Activated B cell treated with CpG ODN at 0.5 μM for 24 hours (primary cell): ENCODE measurements at regions of chr1 and their contacts with region 1.

Region 1: GRCh38 chr1:76154206-76154956 is 79.8 kb downstream of the ST6GALNAC3 start:
- DNase-seq: peak; percentile 60
- ATAC-seq: peak; percentile 91
- H3K4me3 Mint-ChIP-seq: peak overlapping the region; percentile 79
- H3K27ac Mint-ChIP-seq: peak overlapping the region; percentile 42
- H3K4me1 Mint-ChIP-seq: peaks cover 17% of the 10 kb centered on the region
- H3K27me3 Mint-ChIP-seq: peaks cover 4% of the 10 kb centered on the region
- CTCF ChIP-seq: peak; percentile 59

Region 2: DNA sequence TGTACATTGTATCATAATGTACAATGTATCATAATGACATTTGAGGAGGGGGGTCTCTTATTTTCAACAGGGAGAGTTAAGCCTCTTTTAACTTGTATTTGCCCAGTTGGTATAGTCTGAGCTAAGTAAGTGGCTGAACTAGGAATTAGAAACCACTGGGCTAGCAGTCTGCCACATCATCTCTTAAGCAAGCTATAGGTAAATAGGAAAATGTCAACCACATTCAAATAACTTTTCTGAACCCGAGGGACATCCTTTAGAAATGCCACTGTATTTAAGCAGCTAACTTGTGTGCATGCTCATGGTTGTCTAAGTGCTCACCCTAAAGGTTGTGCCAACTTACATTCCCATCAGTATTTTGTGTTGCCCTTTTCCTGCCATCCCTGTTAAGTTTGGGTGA is 186.7 kb before region 1 on chr1:
- CTCF ChIA-PET with region 1: no interaction called
- POLR2A ChIA-PET with region 1: no interaction called
- intact Hi-C with region 1: no loop called
- DNase-seq: no peak
- ATAC-seq: no peak
- H3K4me3 Mint-ChIP-seq: no peak overlapping the region
- H3K27ac Mint-ChIP-seq: no peak overlapping the region
- H3K4me1 Mint-ChIP-seq: no peaks in the 10 kb centered on the region
- H3K27me3 Mint-ChIP-seq: no peaks in the 10 kb centered on the region
- CTCF ChIP-seq: no peak

Region 3: GRCh38 chr1:75991497-75992114 is 162.8 kb before region 1 on chr1:
- CTCF ChIA-PET with region 1: interaction called, 5 read pairs
- POLR2A ChIA-PET with region 1: no interaction called
- intact Hi-C with region 1: loop called (anchors 1 kb)
- DNase-seq: peak; percentile 30
- ATAC-seq: peak; percentile 58
- H3K4me3 Mint-ChIP-seq: no peak overlapping the region
- H3K27ac Mint-ChIP-seq: no peak overlapping the region
- H3K4me1 Mint-ChIP-seq: no peaks in the 10 kb centered on the region
- H3K27me3 Mint-ChIP-seq: peaks cover 3% of the 10 kb centered on the region
- CTCF ChIP-seq: peak; percentile 48

Region 4: GRCh38 chr1:76294482-76295194 is 140.3 kb after region 1 on chr1:
- CTCF ChIA-PET with region 1: no interaction called
- POLR2A ChIA-PET with region 1: no interaction called
- intact Hi-C with region 1: loop called (anchors 2 kb)
- DNase-seq: no peak
- ATAC-seq: peak; percentile 85
- H3K4me3 Mint-ChIP-seq: peak overlapping the region; percentile 29
- H3K27ac Mint-ChIP-seq: peak overlapping the region; percentile 37
- H3K4me1 Mint-ChIP-seq: peaks cover 48% of the 10 kb centered on the region
- H3K27me3 Mint-ChIP-seq: no peaks in the 10 kb centered on the region
- CTCF ChIP-seq: no peak

Region 5: DNA sequence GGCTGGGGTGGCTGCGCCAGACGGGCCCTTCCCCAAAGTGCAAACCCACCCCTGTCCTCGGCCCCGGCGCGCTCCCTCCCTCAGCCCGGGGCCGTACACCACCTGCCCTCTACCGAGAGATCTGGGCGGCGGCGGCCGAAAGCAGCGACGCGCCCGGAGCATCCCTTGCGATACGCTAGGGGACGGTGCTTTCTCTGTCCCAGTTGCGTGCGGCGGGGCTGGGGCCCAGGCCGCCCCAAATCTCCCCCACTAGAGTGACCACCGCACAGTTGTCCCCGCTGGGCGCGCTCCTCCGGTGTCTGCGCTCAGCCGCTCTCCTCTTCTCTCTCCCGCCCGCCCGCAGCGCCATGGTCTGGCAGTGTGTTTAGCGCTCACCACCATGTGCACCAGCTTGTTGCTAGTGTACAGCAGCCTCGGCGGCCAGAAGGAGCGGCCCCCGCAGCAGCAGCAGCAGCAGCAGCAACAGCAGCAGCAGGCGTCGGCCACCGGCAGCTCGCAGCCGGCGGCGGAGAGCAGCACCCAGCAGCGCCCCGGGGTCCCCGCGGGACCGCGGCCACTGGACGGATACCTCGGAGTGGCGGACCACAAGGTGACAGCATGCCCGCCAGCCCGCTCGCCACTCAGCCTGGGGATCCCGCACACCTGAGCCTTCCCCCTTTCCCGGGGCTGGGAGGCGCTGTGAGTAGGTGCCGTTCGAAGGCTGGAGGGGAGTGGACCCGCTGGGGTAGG is 713.9 kb after region 1 on chr1:
- CTCF ChIA-PET with region 1: no interaction called
- POLR2A ChIA-PET with region 1: no interaction called
- intact Hi-C with region 1: loop called (anchors 10 kb)
- DNase-seq: no peak
- ATAC-seq: peak; percentile 21
- H3K4me3 Mint-ChIP-seq: peak overlapping the region; percentile 38
- H3K27ac Mint-ChIP-seq: no peak overlapping the region
- H3K4me1 Mint-ChIP-seq: peaks cover 9% of the 10 kb centered on the region
- H3K27me3 Mint-ChIP-seq: peaks cover 38% of the 10 kb centered on the region
- CTCF ChIP-seq: no peak

Region 6: DNA sequence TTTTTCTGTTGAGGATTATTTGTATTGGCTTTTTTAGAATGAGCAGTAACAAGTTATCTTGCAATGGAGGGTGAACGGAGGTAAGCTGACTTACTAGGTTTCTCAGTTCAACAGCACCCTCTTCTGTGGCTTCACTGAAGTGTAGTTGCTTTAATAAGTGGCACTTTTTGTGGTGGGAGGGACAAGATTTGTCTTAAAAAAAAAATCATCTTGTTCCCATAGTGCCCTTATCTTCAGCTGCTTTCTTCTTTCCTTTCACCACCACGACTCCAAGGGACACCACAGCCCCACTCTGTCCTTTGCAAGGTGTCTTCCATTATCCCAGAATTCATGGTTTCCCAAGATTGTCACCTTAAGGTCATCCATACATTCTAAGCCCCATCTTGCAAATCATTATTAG is 971.9 kb after region 1 on chr1:
- CTCF ChIA-PET with region 1: interaction called, 4 read pairs
- POLR2A ChIA-PET with region 1: no interaction called
- intact Hi-C with region 1: loop called (anchors 1 kb)
- DNase-seq: no peak
- ATAC-seq: no peak
- H3K4me3 Mint-ChIP-seq: no peak overlapping the region
- H3K27ac Mint-ChIP-seq: no peak overlapping the region
- H3K4me1 Mint-ChIP-seq: no peaks in the 10 kb centered on the region
- H3K27me3 Mint-ChIP-seq: no peaks in the 10 kb centered on the region
- CTCF ChIP-seq: no peak

Region 7: GRCh38 chr1:77219166-77219887 is 1064.9 kb after region 1 on chr1 and contains the start of gene PIGK:
- CTCF ChIA-PET with region 1: no interaction called
- POLR2A ChIA-PET with region 1: no interaction called
- intact Hi-C with region 1: loop called (anchors 10 kb)
- DNase-seq: peak; percentile 77
- ATAC-seq: peak; percentile 98
- H3K4me3 Mint-ChIP-seq: peak within 1 kb of the TSS; percentile 95
- H3K27ac Mint-ChIP-seq: peak within 1 kb of the TSS; percentile 89
- H3K4me1 Mint-ChIP-seq: peaks cover 26% of the 10 kb centered on the region
- H3K27me3 Mint-ChIP-seq: no peaks in the 10 kb centered on the region
- CTCF ChIP-seq: no peak
- total RNA-seq, gene PIGK: 10.8 and 11.1 TPM in 2 replicates

Region 8: GRCh38 chr1:77900687-77901293 is 1746.4 kb after region 1 on chr1:
- CTCF ChIA-PET with region 1: no interaction called
- POLR2A ChIA-PET with region 1: no interaction called
- intact Hi-C with region 1: loop called (anchors 2 kb)
- DNase-seq: no peak
- ATAC-seq: no peak
- H3K4me3 Mint-ChIP-seq: no peak overlapping the region
- H3K27ac Mint-ChIP-seq: no peak overlapping the region
- H3K4me1 Mint-ChIP-seq: no peaks in the 10 kb centered on the region
- H3K27me3 Mint-ChIP-seq: no peaks in the 10 kb centered on the region
- CTCF ChIP-seq: no peak